IMR-90 (cell line): ENCODE measurements at regions of chr21 and their contacts with region 1.

Region 1: GRCh38 chr21:21163904-21164303 is 165.7 kb downstream of the NCAM2 start:
- DNase-seq: peak; percentile 82
- ATAC-seq: peak; percentile 54
- H3K4me3 ChIP-seq: no peak overlapping the region
- H3K27ac ChIP-seq: peak overlapping the region; percentile 40; the same call in 1 of the 2 replicates
- H3K4me1 ChIP-seq: peaks cover 4% of the 10 kb centered on the region
- H3K27me3 ChIP-seq: no peaks in the 10 kb centered on the region
- CTCF ChIP-seq: peak; percentile 69
- POLR2A ChIP-seq: no peak
- RAD21 ChIP-seq: peak; percentile 76

Region 2: GRCh38 chr21:21200103-21200642 is 36.3 kb after region 1 on chr21:
- CTCF ChIA-PET with region 1: no interaction called
- POLR2A ChIA-PET with region 1: no interaction called
- dilution Hi-C with region 1: no loop called
- in situ Hi-C with region 1: no loop called
- intact Hi-C with region 1: loop called (anchors 2 kb)
- DNase-seq: peak; percentile 99
- ATAC-seq: peak; percentile 86
- H3K4me3 ChIP-seq: no peak overlapping the region
- H3K27ac ChIP-seq: peak overlapping the region; percentile 96
- H3K4me1 ChIP-seq: peaks cover 11% of the 10 kb centered on the region
- H3K27me3 ChIP-seq: no peaks in the 10 kb centered on the region
- CTCF ChIP-seq: no peak
- POLR2A ChIP-seq: no peak
- RAD21 ChIP-seq: no peak

Region 3: GRCh38 chr21:21213297-21213696 is 49.4 kb after region 1 on chr21:
- CTCF ChIA-PET with region 1: no interaction called
- POLR2A ChIA-PET with region 1: no interaction called
- dilution Hi-C with region 1: no loop called
- in situ Hi-C with region 1: no loop called
- intact Hi-C with region 1: no loop called
- DNase-seq: peak; percentile 42
- ATAC-seq: peak; percentile 53; the same call in 1 of the 2 replicates
- H3K4me3 ChIP-seq: no peak overlapping the region
- H3K27ac ChIP-seq: no peak overlapping the region
- H3K4me1 ChIP-seq: no peaks in the 10 kb centered on the region
- H3K27me3 ChIP-seq: no peaks in the 10 kb centered on the region
- CTCF ChIP-seq: no peak
- POLR2A ChIP-seq: no peak
- RAD21 ChIP-seq: no peak

Region 4: GRCh38 chr21:21373969-21374368 is 210.1 kb after region 1 on chr21:
- CTCF ChIA-PET with region 1: no interaction called
- POLR2A ChIA-PET with region 1: no interaction called
- dilution Hi-C with region 1: no loop called
- in situ Hi-C with region 1: loop called (anchors 25 kb)
- intact Hi-C with region 1: loop called (anchors 1 kb)
- DNase-seq: no peak
- ATAC-seq: peak; percentile 42; the same call in 1 of the 2 replicates
- H3K4me3 ChIP-seq: no peak overlapping the region
- H3K27ac ChIP-seq: no peak overlapping the region
- H3K4me1 ChIP-seq: no peaks in the 10 kb centered on the region
- H3K27me3 ChIP-seq: no peaks in the 10 kb centered on the region
- CTCF ChIP-seq: peak; percentile 44
- POLR2A ChIP-seq: no peak
- RAD21 ChIP-seq: peak; percentile 44

Region 5: DNA sequence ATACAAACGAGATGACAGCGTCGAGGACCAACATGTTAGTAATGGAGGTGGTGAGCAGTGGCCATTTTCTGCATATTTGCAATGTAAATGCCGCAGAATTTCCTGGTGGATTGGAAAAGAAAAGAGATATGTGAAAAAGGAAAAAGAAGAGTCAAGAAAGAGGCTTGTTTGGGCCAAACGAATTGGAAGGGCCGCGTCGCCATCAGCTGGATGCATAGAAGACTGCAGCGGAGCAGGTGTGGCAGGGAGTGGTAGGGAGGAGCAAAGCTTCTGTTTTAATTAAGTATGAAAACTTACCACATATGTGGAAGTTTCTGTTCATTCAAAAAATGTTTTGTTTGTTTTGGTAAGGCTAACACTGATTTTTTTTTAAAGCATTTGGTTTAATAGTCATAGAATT is 525.0 kb after region 1 on chr21:
- CTCF ChIA-PET with region 1: no interaction called
- POLR2A ChIA-PET with region 1: no interaction called
- dilution Hi-C with region 1: no loop called
- in situ Hi-C with region 1: no loop called
- intact Hi-C with region 1: loop called (anchors 1 kb)
- DNase-seq: peak; percentile 37
- ATAC-seq: peak; percentile 77
- H3K4me3 ChIP-seq: no peak overlapping the region
- H3K27ac ChIP-seq: no peak overlapping the region
- H3K4me1 ChIP-seq: no peaks in the 10 kb centered on the region
- H3K27me3 ChIP-seq: no peaks in the 10 kb centered on the region
- CTCF ChIP-seq: peak; percentile 61
- POLR2A ChIP-seq: no peak
- RAD21 ChIP-seq: peak; percentile 77

Region 6: GRCh38 chr21:21750124-21750825 is 586.4 kb after region 1 on chr21:
- CTCF ChIA-PET with region 1: no interaction called
- POLR2A ChIA-PET with region 1: no interaction called
- dilution Hi-C with region 1: no loop called
- in situ Hi-C with region 1: no loop called
- intact Hi-C with region 1: no loop called
- DNase-seq: no peak
- ATAC-seq: no peak
- H3K4me3 ChIP-seq: no peak overlapping the region
- H3K27ac ChIP-seq: no peak overlapping the region
- H3K4me1 ChIP-seq: no peaks in the 10 kb centered on the region
- H3K27me3 ChIP-seq: no peaks in the 10 kb centered on the region
- CTCF ChIP-seq: no peak
- POLR2A ChIP-seq: no peak
- RAD21 ChIP-seq: no peak

Region 7: DNA sequence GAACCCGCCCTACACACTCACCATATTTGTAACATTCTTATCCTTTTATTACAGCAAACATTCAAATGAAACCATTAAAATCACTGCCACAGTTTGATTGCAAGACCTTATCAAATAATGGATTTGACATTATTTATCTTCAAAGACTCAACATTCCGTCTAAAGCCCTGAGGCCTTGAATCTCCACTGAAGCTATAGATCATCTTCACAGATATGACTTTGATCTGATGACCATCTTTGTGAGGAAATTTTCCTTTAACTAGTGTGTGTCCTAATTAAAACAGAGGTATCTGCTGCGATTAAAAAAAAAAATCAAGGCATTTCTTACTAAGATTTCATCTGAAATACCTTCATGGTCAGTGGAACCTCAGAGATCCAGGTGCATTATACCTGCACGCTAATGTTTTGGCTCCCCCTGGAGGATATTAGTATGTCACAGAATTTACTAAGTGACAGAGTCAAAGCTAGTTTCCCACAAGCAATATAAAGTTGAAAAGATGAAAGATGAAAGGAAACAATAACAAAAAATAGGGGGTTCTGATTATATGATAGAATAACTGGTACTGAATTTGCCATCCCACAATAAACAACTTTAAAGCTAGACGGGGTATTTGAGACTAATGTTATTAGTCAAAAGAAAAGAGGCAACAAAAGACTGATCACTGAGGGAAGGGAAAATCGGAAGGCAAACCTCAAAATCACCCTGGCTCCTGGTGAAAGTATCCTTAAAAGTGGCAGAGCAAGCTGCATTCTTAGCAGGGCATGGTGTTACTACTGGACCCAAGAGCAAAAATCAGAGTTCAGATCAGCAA is 757.7 kb after region 1 on chr21:
- CTCF ChIA-PET with region 1: no interaction called
- POLR2A ChIA-PET with region 1: no interaction called
- dilution Hi-C with region 1: no loop called
- in situ Hi-C with region 1: no loop called
- intact Hi-C with region 1: loop called (anchors 5 kb)
- DNase-seq: peak; percentile 11
- ATAC-seq: peak; percentile 46; the same call in 1 of the 2 replicates
- H3K4me3 ChIP-seq: no peak overlapping the region
- H3K27ac ChIP-seq: no peak overlapping the region
- H3K4me1 ChIP-seq: no peaks in the 10 kb centered on the region
- H3K27me3 ChIP-seq: no peaks in the 10 kb centered on the region
- CTCF ChIP-seq: peak; percentile 53
- POLR2A ChIP-seq: no peak
- RAD21 ChIP-seq: peak; percentile 72